Aorta (tissue), 5 donors: ENCODE measurements at regions of chr9 and their contacts with region 1.

Region 1: DNA sequence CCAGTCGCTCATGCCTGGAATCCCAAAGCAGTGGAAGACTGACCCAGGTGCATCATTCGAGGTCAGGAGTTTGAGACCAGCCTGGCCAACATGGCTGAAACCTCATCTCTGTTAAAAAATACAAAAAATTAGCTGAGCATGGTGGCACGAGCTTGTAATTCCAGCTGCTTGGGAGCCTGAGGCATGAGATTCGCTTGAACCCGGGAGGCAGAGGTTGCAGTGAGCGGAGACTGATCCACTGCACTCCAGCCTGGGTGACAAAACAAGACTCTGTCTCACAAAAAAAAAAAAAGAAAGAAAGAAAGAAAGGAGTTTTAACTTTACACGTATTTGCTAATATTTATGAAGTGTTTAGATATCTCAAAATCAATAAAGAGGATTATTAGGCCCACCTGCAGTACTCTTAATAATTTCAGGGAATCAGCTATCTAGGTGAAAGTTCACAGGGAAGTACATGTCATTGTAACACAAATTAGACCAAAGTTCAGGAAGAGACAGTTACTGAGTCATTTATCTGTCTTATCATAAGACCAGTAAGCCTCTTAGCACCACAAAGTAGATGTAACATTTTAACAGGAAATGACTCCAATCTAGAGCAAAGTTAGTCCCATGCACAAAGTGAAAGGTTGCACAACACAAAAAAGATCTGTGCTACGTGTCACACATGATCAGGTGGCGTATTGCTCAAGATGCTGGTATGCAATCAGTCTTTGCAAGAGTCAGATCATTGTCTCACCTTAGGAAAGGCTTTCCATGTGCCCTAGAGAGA is 34.1 kb upstream of the PLIN2 start:
- DNase-seq: no peak
- ATAC-seq: peak; percentile 85
- H3K4me3 ChIP-seq: no peak overlapping the region
- H3K27ac ChIP-seq: no peak overlapping the region
- H3K4me1 ChIP-seq: no peaks in the 10 kb centered on the region
- H3K27me3 ChIP-seq: no peaks in the 10 kb centered on the region

Region 2: DNA sequence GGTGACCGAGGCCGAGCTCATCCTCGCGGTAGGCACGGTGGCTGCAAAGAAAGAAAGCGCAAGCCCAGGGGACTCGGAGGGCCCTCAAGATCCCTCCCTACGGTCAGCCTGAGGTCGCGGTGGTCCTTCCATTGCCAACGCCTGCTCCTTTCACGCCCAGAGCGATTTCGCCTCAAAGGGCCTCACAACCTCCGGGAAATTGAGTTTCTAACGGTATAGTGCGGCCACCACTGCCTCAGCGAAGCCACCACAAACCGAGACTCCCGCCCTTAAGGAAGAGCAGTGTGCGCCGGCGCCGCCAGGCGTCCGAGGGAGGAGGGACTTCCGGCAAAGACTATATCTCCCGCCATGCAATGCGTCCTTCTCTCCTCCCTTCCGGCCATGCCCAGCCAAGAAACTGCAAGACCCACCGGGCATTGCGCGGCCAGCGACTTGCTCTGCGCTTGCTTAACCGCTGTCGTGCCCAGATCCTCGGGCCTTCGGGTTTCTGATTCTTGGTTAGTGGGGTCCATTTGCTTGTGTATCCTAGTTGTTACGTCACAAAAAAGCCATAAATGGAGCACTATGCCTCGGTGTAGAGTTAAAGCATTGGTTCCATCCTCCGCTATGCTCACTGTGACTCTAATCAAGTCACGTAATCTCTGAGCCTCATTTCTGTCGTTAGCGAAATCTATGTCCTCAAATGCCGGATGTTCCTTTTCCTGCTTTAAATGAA is 58.7 kb before region 1 on chr9 and contains the start of gene HAUS6:
- intact Hi-C with region 1: loop called in 1 of 2 experiments (anchors 5 kb)
- DNase-seq: peak; percentile 98 to 99
- ATAC-seq: peak; percentile 99
- H3K4me3 ChIP-seq: peak within 1 kb of the TSS; percentile 23 to 76
- H3K27ac ChIP-seq: peak within 1 kb of the TSS in 1 of 2 donors; percentile 66
- H3K4me1 ChIP-seq: no peaks in the 10 kb centered on the region
- H3K27me3 ChIP-seq: no peaks in the 10 kb centered on the region
- total RNA-seq, gene HAUS6: 8.4 to 9.2 TPM

Region 3: GRCh38 chr9:19127881-19128500 is 33.5 kb before region 1 on chr9:
- intact Hi-C with region 1: loop called in 1 of 2 experiments (anchors 2 kb)
- DNase-seq: peak; percentile 62 to 80
- ATAC-seq: peak; percentile 56
- H3K4me3 ChIP-seq: peak overlapping the region; percentile 55 to 62
- H3K27ac ChIP-seq: peak overlapping the region; percentile 17 to 87
- H3K4me1 ChIP-seq: no peaks in the 10 kb centered on the region
- H3K27me3 ChIP-seq: no peaks in the 10 kb centered on the region